Activated CD4-positive, alpha-beta T cell treated with anti-CD3 and anti-CD28 coated beads, Interleukin-2, amount 10 ng/mL, durations not matched to agents 24 days and 14 days (primary cell): ENCODE measurements at regions of chr10 and their contacts with region 1.

Region 1: DNA sequence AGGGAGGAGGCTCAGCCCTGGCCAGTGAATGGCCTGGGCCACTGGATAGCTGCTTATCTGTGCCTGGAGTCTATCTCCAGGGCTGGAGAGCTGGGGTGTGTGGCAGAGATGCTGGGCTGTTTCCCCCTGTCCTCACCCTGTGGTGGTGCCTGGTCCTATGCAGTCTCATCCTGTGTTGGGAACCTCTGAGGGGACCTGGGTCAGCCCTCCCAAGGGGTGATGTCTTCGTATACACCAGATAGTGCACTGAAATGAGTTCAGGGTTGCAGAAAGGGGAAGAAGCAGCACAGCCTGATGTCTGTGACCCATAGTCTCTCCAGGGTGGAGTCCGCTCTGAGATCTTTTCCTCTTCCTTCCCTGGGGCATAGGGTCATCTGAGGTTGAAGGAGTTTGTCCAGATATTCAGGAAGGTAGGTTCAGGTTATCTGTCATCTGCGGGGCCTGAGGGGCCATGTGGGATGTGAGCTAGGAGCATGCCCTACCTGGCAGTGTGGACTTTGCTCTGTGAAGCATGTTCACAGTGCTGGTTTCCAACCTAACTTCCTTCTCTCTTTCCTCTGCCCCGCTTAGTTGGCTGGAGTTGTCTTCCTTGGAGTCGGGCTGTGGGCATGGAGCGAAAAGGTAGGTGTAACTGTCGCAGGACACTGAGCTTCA is 33.4 kb upstream of the SH2D4B start:
- DNase-seq: no peak
- H3K4me3 Mint-ChIP-seq: peak overlapping the region; percentile 11
- H3K27ac Mint-ChIP-seq: peak overlapping the region; percentile 77
- H3K4me1 Mint-ChIP-seq: peaks cover 62% of the 10 kb centered on the region
- H3K27me3 Mint-ChIP-seq: no peaks in the 10 kb centered on the region

Region 2: DNA sequence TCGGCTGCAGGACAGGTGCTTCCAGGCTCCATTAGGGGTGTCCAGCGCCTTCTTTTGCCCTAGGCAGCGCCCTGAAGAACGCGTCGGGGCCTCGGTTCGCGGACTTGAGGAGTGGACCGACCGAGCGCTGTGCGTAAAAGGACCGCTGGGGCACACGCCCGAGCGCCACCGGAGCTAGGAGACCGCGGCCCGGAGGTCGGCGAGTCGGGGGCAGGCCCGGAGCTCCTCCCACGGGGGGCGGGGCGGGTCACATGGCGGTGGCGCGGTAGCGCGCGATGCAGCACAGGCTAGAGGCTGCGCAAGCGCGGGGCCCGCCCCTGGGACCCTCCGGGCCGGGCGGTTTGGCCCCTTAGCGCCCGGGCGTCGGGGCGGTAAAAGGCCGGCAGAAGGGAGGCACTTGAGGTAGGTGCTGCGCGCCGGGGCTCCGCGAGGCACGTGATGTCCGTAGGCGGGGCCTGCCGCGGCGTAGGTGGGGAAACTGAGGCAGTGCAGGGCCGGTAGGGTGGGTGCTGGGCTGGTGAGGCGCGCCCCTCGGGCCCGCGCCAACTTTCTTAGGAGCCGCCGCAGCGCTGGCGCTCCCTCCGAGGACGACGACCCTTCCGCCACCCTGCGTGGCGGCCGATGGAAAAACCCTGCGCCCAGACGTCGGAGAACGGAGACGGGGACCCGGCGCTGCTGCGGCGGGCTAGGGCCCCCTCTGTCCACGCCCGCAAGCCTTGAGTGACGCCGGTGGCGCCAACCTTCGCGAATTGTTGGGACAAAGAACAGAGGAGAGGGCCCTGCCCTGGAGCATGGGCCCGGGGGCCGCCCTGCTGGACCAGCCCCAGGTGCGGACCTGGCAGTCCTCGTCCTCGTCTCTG is 95.8 kb before region 1 on chr10 and contains the start of gene PRXL2A:
- intact Hi-C with region 1: loop called (anchors 1 kb)
- DNase-seq: peak; percentile 95
- H3K4me3 Mint-ChIP-seq: peak within 1 kb of the TSS; percentile 90
- H3K27ac Mint-ChIP-seq: peak within 1 kb of the TSS; percentile 96
- H3K4me1 Mint-ChIP-seq: peaks cover 31% of the 10 kb centered on the region
- H3K27me3 Mint-ChIP-seq: peaks cover 27% of the 10 kb centered on the region
- total RNA-seq, gene PRXL2A: 14.8 and 16.4 TPM in 2 replicates

Region 3: DNA sequence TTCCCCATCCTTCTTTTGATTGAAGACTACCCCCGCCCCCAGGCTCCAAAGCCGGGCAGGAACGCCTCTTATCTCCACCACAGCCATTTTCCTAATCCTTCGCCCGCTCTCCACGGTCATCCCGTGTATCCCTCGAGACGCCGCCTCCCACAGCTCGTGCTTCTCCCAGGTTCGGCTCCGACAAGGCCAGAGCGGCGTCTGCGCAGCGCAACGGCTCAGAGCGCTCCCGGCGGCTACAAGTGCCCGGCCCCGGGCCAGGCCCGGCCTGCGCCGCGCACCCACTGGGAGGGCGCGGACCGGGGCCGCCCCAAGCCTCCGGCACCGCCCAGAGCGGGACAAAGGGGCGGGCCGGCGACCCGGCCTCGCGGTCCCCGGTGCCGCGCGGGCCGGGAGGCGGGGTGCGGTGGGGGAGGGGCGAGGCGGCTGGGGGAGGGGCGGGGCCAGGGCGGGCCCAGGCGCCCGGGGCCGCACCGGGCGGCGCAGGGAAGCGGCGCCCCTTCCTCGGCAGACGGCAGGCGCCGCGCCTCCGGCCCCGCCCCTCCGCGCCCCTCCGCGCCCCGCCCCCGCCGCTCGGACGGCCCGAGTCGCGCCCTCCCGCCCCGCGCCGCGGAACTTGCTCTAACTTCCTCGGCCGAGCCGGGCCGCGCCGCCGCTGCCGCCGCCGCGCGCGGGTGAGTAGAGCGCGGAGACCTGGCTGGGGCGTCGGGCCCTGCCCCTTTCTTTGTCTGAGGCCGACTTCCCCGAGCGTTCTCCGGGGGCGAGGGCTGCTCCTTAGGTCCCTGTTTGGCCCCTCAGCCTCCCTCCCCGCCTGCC is 50.4 kb before region 1 on chr10 and contains the start of gene TSPAN14:
- intact Hi-C with region 1: loop called (anchors 2 kb)
- DNase-seq: peak; percentile 94
- H3K4me3 Mint-ChIP-seq: peak within 1 kb of the TSS; percentile 98
- H3K27ac Mint-ChIP-seq: peak within 1 kb of the TSS; percentile 88
- H3K4me1 Mint-ChIP-seq: peaks cover 41% of the 10 kb centered on the region
- H3K27me3 Mint-ChIP-seq: no peaks in the 10 kb centered on the region
- total RNA-seq, gene TSPAN14: 57.8 and 61.7 TPM in 2 replicates

Region 4: DNA sequence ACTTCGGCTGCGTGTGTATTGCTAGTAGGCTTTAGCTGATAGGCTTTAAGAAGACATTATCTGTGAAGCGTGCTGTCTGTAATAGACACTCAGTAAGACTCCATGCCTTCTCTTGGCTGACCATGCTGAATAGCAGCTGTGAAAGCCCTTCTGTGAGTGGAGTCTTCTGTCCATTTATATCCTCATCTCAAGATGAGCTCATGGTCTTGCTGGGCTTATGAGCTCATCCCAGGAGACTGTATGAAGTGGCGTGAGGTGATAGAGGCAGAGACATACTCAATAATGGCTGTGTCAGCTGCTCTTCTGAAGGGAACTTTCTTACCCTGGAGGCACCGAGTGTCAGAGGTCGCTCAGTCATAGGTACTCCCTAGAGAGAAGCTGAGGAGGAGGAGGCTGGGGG is 144.9 kb after region 1 on chr10:
- intact Hi-C with region 1: no loop called
- DNase-seq: no peak
- H3K4me3 Mint-ChIP-seq: no peak overlapping the region
- H3K27ac Mint-ChIP-seq: no peak overlapping the region
- H3K4me1 Mint-ChIP-seq: no peaks in the 10 kb centered on the region
- H3K27me3 Mint-ChIP-seq: peaks cover 5% of the 10 kb centered on the region